Ovary (tissue), 10 donors: ENCODE measurements at regions of chr5 and their contacts with region 1.

Region 1: GRCh38 chr5:151847871-151848270 is 76.1 kb downstream of the G3BP1 start:
- DNase-seq: no peak
- H3K4me3 ChIP-seq: no peak overlapping the region
- H3K27ac ChIP-seq: no peak overlapping the region
- H3K4me1 ChIP-seq: no peaks in the 10 kb centered on the region
- H3K27me3 ChIP-seq: no peaks in the 10 kb centered on the region
- CTCF ChIP-seq: no peak
- EP300 ChIP-seq: no peak
- POLR2A ChIP-seq: no peak

Region 2: DNA sequence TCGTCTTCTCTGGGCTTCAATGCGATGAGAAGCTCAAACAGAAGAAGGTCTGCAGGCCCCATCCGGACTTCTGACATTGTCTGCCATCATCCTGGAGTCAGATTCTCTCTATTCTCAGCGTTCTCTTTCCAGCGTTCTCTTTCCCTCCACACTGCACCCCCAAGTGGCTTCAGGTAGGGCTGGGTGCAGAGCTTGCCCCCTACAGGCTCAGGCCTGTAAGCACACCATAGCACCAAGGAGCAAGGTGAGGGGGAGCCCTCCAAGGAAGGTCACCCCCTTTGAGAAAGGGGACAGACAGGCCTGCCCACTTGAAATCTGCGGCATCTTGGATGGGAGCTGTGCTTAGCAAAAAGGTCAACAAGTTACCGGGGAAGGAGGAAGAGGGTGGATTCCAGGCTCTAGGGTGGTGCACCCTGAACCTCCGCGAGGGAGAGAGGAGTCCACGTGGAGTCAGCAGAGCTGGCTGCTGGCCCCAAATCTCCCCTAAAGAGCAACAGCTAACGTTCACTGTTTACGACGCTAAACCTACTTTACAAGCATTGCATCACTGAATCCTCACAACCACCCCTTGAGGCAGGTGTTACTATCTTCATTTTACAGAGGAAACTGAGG is 800.0 kb before region 1 on chr5:
- intact Hi-C with region 1: no loop called
- DNase-seq: peak in 3 of 5 donors; percentile 56 to 70 (median 66)
- H3K4me3 ChIP-seq: no peak overlapping the region
- H3K27ac ChIP-seq: peak overlapping the region in 1 of 2 donors; percentile 20
- H3K4me1 ChIP-seq: no peaks in the 10 kb centered on the region
- H3K27me3 ChIP-seq: no peaks in the 10 kb centered on the region
- CTCF ChIP-seq: peak; percentile 46 to 89 (median 83)
- EP300 ChIP-seq: no peak
- POLR2A ChIP-seq: no peak

Region 3: GRCh38 chr5:151740336-151740942 is 107.4 kb before region 1 on chr5:
- intact Hi-C with region 1: no loop called
- DNase-seq: peak; percentile 82 to 88 (median 87)
- H3K4me3 ChIP-seq: no peak overlapping the region
- H3K27ac ChIP-seq: peak overlapping the region; percentile 38 to 50
- H3K4me1 ChIP-seq: peaks cover 14% of the 10 kb centered on the region
- H3K27me3 ChIP-seq: no peaks in the 10 kb centered on the region
- CTCF ChIP-seq: peak; percentile 72 to 93 (median 93)
- EP300 ChIP-seq: no peak
- POLR2A ChIP-seq: no peak

Region 4: DNA sequence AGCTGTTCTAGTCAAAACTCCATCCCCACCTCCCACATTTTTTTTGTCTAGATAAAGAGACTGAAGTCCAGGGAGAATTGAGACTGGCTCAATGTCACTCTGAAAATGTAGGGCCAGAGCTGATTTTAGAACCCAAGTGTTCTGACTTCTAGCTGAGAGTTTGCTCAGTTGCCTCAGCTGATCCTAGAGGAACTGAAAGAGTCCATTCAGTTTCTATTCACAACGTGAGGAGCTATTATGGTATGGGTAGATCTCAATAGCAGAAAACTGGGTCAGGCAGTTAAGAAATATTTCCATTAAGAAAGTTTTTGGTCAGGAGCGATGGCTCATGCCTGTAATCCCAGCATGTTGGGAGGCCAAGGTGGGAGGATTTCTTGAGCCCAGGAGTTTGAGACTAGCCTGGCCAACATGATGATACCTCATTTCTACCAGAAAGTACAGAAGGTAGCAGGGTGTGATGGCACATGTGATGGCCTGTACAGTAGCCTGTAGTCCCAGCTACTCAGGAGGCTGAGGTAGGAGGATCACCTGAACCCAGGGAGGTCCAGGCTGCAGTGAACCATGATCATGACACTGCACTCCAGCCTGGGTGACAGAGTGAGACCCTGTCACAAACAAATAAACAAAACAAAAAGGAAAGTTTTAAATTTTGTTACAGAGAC is 15.1 kb after region 1 on chr5:
- intact Hi-C with region 1: loop called in 1 of 4 experiments (anchors 1 kb)
- DNase-seq: no peak
- H3K4me3 ChIP-seq: no peak overlapping the region
- H3K27ac ChIP-seq: no peak overlapping the region
- H3K4me1 ChIP-seq: no peaks in the 10 kb centered on the region
- H3K27me3 ChIP-seq: no peaks in the 10 kb centered on the region
- CTCF ChIP-seq: no peak
- EP300 ChIP-seq: no peak
- POLR2A ChIP-seq: no peak

Region 5: DNA sequence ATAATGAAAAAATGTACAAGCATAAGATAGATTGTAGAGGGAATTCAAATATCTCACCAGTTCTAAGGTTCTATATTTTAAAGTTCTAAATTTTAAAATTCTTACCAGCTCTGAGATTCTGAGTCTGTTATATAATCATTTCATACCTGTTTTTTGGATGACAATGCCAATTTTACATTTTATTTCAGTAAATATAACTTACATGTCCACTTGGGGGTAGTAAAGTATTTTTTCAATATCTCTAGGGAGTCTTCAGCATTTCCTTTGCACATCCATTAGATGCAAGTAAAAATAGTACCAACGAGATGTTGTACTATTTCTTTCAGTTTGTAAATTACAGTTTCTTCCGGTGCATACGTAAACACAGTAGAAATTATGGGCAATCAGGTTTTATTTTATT is 531.5 kb after region 1 on chr5:
- intact Hi-C with region 1: loop called in 1 of 4 experiments (anchors 5 kb)
- DNase-seq: no peak
- H3K4me3 ChIP-seq: no peak overlapping the region
- H3K27ac ChIP-seq: no peak overlapping the region
- H3K4me1 ChIP-seq: peaks cover 2% of the 10 kb centered on the region
- H3K27me3 ChIP-seq: no peaks in the 10 kb centered on the region
- CTCF ChIP-seq: no peak
- EP300 ChIP-seq: no peak
- POLR2A ChIP-seq: no peak